ENCODE measurements at regions of chr2 and their contacts with region 1.

Region 1: DNA sequence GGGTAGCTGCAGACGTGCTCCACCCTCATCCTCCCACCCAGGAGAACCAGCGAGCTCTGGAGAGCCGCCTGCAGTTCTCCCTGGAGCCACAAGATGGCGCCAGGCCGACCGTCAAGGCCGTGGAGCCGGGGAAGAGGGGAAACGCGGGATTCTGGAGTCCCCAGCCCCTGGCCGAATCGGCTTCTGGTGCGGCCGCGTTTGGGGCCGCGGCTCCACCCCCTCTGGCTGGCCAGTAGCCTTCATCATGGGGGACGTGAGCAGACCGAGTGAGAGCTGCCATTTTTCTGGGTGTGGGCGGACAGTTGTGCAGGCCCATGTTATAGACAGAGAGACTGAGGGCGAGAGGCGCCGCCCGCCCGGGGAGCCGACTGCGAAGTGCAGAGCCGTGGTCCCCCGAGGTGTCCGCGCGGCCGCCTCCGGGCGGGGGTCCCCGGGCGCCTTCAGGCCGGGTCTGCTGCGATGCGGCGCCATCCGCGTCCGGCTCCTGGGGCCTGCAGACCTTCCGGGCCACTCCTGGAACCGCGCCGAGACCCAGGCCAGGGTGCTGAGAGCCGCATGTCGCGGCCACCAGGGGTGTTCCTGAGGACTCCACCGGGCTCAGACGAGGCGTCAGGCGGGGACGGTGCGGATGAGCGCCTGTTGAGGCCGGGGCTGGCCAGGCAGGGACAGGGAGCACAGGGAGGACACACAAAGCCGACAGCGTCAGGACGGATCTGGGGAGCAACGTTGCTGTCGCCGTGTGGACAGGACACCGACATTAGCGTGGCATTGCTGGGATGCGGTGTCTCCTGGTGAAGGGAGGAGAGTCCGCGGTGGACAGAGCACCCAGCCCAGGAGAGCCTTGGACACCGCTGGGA is 418.2 kb upstream of the HS6ST1 start:
- DNase-seq: peak; percentile 77
- H3K4me3 ChIP-seq: peak overlapping the region; percentile 24
- H3K27ac ChIP-seq: no peak overlapping the region
- H3K4me1 ChIP-seq: no peaks in the 10 kb centered on the region
- H3K27me3 ChIP-seq: no peaks in the 10 kb centered on the region
- CTCF ChIP-seq: peak; percentile 100

Region 2: GRCh38 chr2:128321784-128322714 is 414.9 kb before region 1 on chr2:
- intact Hi-C with region 1: loop called (anchors 10 kb)
- DNase-seq: peak; percentile 85
- H3K4me3 ChIP-seq: peak overlapping the region; percentile 41
- H3K27ac ChIP-seq: peak overlapping the region; percentile 27
- H3K4me1 ChIP-seq: peaks cover 3% of the 10 kb centered on the region
- H3K27me3 ChIP-seq: no peaks in the 10 kb centered on the region
- CTCF ChIP-seq: peak; percentile 98

Region 3: GRCh38 chr2:129152514-129152913 is 415.6 kb after region 1 on chr2:
- intact Hi-C with region 1: no loop called
- DNase-seq: no peak
- H3K4me3 ChIP-seq: no peak overlapping the region
- H3K27ac ChIP-seq: no peak overlapping the region
- H3K4me1 ChIP-seq: no peaks in the 10 kb centered on the region
- H3K27me3 ChIP-seq: no peaks in the 10 kb centered on the region
- CTCF ChIP-seq: no peak

Region 4: DNA sequence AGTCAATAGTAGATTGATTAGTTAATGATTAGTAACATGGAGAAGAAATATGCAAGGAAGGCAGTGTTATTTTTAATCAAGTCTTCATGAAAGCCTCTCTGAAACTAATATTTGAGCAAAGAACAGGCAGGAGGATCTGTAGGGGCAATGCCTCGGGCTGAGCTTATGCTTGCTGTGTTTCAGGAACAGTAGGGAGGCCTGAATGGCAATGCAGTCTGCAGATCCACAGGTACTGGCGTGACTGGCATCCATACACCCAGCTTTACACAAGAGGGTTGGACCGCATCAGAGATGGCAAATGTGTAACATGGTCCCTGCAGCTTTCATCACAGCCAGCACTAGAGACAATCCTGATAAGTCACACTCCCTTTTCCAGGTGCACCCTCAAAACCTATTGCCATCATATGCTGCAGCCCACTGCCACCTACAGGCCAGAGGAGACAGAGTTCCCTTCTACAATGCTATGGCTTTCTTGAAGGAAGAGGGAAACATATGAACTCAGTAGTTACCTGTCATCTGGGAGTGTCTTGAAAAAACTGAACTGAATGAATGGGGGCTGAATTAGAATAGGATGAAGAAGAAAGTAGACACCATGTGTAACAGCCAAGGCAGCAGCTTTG is 660.2 kb after region 1 on chr2:
- intact Hi-C with region 1: loop called (anchors 10 kb)
- DNase-seq: no peak
- H3K4me3 ChIP-seq: no peak overlapping the region
- H3K27ac ChIP-seq: no peak overlapping the region
- H3K4me1 ChIP-seq: no peaks in the 10 kb centered on the region
- H3K27me3 ChIP-seq: no peaks in the 10 kb centered on the region
- CTCF ChIP-seq: peak; percentile 40

Measured in colonic mucosa (tissue), 4 donors.